Naive thymus-derived CD8-positive, alpha-beta T cell (primary cell): ENCODE measurements at regions of chr13 and their contacts with region 1.

Region 1: GRCh38 chr13:33542283-33543088 is 256.9 kb upstream of the STARD13 start:
- DNase-seq: peak; percentile 97 to 99 (median 99)
- ATAC-seq: peak; percentile 84 to 86
- H3K4me3 Mint-ChIP-seq: peak overlapping the region; percentile 91 to 98 (median 95)
- H3K27ac Mint-ChIP-seq: peak overlapping the region; percentile 99 to 100 (median 100)
- H3K4me1 Mint-ChIP-seq: peaks cover 18 to 51% (median 42%) of the 10 kb centered on the region in 4 donors
- H3K27me3 Mint-ChIP-seq: no peaks in the 10 kb centered on the region

Region 2: DNA sequence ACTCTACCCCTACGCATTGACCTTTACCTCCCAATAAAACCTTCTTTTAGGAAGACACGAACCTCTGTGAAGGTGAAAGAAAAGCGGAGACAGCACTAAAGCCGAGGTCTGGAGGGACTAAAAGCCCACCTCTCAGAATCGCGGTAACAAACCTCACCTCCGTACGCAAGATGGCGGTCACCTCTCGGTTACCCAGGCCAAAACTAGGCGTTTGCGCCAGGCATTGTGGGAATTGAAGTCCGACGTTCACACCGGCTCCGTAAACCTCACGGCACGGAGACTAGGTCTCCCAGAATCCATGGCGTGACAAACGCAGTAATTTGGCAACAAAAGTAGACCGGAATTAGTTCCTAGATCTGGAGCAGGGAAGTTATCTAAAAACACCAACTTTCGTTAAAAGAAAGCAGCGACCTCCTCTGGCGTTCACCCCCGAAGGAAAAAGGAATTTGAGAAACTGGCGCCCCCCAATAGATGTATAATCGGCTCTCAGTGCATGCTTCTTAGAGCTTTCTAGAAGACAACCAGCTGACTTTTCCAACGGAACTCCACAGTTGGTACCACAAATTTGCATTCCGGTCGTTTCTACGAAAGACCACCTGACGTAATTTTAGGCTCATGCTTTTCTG is 1003.8 kb before region 1 on chr13 and contains the start of gene N4BP2L2:
- POLR2A ChIA-PET with region 1: interaction called, 24 read pairs
- DNase-seq: peak; percentile 70 to 95 (median 90)
- ATAC-seq: peak; percentile 96
- H3K4me3 Mint-ChIP-seq: peak within 1 kb of the TSS; percentile 95 to 100 (median 97)
- H3K27ac Mint-ChIP-seq: peak within 1 kb of the TSS; percentile 98 to 100 (median 100)
- H3K4me1 Mint-ChIP-seq: peaks cover 18 to 52% (median 45%) of the 10 kb centered on the region in 4 donors
- H3K27me3 Mint-ChIP-seq: peaks cover 0 to 4% (median 0%) of the 10 kb centered on the region in 5 donors
- polyA plus RNA-seq, gene N4BP2L2: 126 to 186 (median 168) TPM

Region 3: GRCh38 chr13:32586080-32586900 is 956.2 kb before region 1 on chr13 and contains the start of gene PDS5B:
- POLR2A ChIA-PET with region 1: interaction called, 10 read pairs
- DNase-seq: peak; percentile 92 to 99 (median 95)
- ATAC-seq: peak; percentile 88 to 91
- H3K4me3 Mint-ChIP-seq: peak within 1 kb of the TSS; percentile 93 to 99 (median 97)
- H3K27ac Mint-ChIP-seq: peak within 1 kb of the TSS; percentile 94 to 98 (median 96)
- H3K4me1 Mint-ChIP-seq: peaks cover 27 to 42% (median 41%) of the 10 kb centered on the region in 4 donors
- H3K27me3 Mint-ChIP-seq: no peaks in the 10 kb centered on the region
- polyA plus RNA-seq, gene PDS5B: 32.0 to 38.1 (median 34.7) TPM

Region 4: GRCh38 chr13:33285420-33286124 is 256.9 kb before region 1 on chr13 and contains the start of gene STARD13:
- POLR2A ChIA-PET with region 1: no interaction called
- DNase-seq: peak in 1 of 10 donors; percentile 6
- ATAC-seq: peak in 1 of 2 donors; percentile 53
- H3K4me3 Mint-ChIP-seq: peak within 1 kb of the TSS; percentile 69 to 88 (median 80)
- H3K27ac Mint-ChIP-seq: peak within 1 kb of the TSS in 2 of 10 donors; percentile 7 to 85
- H3K4me1 Mint-ChIP-seq: peaks cover 11 to 22% (median 19%) of the 10 kb centered on the region in 4 donors
- H3K27me3 Mint-ChIP-seq: peaks cover 41 to 65% (median 52%) of the 10 kb centered on the region in 5 donors
- polyA plus RNA-seq, gene STARD13: not detected

Region 5: DNA sequence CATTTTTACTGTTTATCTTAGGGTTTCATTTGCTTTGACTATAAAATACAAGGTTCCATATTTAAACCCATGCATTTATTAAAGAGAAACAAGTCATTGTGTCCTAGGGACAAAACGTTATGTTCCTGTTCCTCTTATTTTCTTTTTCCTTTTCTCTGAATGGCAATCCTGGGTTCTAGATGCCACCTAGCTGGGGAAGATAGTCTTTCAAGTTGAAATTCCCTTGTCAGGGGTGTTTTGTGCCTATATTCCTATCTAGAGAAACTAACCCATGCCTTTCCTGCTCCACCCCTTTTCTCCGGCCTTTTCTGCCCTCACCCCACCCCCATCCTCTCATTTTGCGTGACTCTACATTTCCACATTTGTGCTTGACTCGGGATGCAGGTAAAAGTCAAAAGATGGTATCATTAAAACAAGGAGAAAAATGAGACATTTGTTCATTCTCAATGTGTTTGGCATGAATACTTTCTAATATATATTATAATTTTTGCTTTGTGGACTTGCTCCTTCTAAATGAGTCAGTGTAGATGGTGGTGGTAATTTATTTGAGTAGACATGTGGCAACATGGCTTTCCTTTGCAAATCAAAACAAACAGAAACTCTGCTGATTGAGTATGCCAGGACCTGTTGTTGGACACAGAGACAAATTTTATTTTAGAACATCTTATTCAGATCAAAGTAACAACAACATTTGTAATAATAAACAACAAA is 230.2 kb before region 1 on chr13:
- POLR2A ChIA-PET with region 1: no interaction called
- DNase-seq: no peak
- ATAC-seq: no peak
- H3K4me3 Mint-ChIP-seq: no peak overlapping the region
- H3K27ac Mint-ChIP-seq: no peak overlapping the region
- H3K4me1 Mint-ChIP-seq: no peaks in the 10 kb centered on the region
- H3K27me3 Mint-ChIP-seq: peaks cover 14 to 31% (median 19%) of the 10 kb centered on the region in 5 donors

Region 6: GRCh38 chr13:33554919-33555791 is 12.7 kb after region 1 on chr13:
- POLR2A ChIA-PET with region 1: no interaction called
- DNase-seq: no peak
- ATAC-seq: no peak
- H3K4me3 Mint-ChIP-seq: no peak overlapping the region
- H3K27ac Mint-ChIP-seq: no peak overlapping the region
- H3K4me1 Mint-ChIP-seq: no peaks in the 10 kb centered on the region
- H3K27me3 Mint-ChIP-seq: peaks cover 5 to 12% (median 6%) of the 10 kb centered on the region in 5 donors